ENCODE measurements at regions of chr4 and their contacts with region 1.

Region 1: GRCh38 chr4:147160908-147161513 is 215.3 kb upstream of the TTC29 start:
- DNase-seq: peak; percentile 18
- H3K4me3 Mint-ChIP-seq: no peak overlapping the region
- H3K27ac Mint-ChIP-seq: no peak overlapping the region
- H3K4me1 Mint-ChIP-seq: peaks cover 2% of the 10 kb centered on the region
- H3K27me3 Mint-ChIP-seq: peaks cover 35% of the 10 kb centered on the region

Region 2: GRCh38 chr4:147590249-147590920 is 429.4 kb after region 1 on chr4:
- CTCF ChIA-PET with region 1: interaction called, 4 read pairs
- intact Hi-C with region 1: loop called (anchors 1 kb)
- DNase-seq: peak; percentile 64
- H3K4me3 Mint-ChIP-seq: no peak overlapping the region
- H3K27ac Mint-ChIP-seq: no peak overlapping the region
- H3K4me1 Mint-ChIP-seq: peaks cover 2% of the 10 kb centered on the region
- H3K27me3 Mint-ChIP-seq: no peaks in the 10 kb centered on the region

Region 3: GRCh38 chr4:147714575-147715401 is 553.8 kb after region 1 on chr4:
- CTCF ChIA-PET with region 1: no interaction called
- intact Hi-C with region 1: loop called (anchors 10 kb)
- DNase-seq: no peak
- H3K4me3 Mint-ChIP-seq: no peak overlapping the region
- H3K27ac Mint-ChIP-seq: no peak overlapping the region
- H3K4me1 Mint-ChIP-seq: peaks cover 4% of the 10 kb centered on the region
- H3K27me3 Mint-ChIP-seq: peaks cover 7% of the 10 kb centered on the region

Region 4: GRCh38 chr4:148503681-148504080 is 1342.7 kb after region 1 on chr4:
- CTCF ChIA-PET with region 1: no interaction called
- intact Hi-C with region 1: no loop called
- DNase-seq: no peak
- H3K4me3 Mint-ChIP-seq: no peak overlapping the region
- H3K27ac Mint-ChIP-seq: no peak overlapping the region
- H3K4me1 Mint-ChIP-seq: no peaks in the 10 kb centered on the region
- H3K27me3 Mint-ChIP-seq: no peaks in the 10 kb centered on the region